ENCODE measurements at regions of chr4 and their contacts with region 1.

Region 1: DNA sequence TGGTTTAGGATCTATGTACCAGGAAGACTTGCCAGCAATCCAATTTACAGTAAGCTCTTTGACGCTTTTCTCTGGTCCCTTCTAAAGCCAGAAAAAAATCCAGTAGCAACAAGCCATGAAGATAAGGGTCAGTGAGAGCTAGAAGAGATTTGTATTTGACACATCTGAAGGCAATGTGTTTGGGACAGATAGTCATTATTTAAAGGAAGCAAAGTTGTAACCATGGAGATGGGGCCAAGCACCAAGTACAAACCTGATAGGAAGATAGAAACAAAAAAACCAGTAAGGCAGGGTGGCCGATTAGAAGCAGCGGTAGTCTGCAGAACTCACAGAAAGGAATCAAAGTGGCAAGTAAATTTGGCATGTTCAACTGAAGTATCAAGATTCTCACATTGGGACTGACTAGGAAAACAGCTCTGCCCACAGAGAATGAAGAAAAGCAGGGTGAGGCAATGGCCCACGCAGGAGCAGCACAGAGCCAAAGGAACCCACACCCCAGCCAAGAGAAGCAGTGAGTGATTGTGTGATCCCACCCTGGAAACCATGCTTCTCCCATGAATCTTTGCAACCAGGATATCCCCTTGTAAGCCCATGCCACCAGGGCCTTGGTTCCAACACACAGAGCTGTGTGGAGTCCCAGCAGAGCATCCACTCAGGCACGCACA is 12.9 kb upstream of the C4orf54 start:
- DNase-seq: no peak
- ATAC-seq: no peak
- H3K4me3 ChIP-seq: no peak overlapping the region
- H3K27ac ChIP-seq: no peak overlapping the region
- H3K4me1 ChIP-seq: no peaks in the 10 kb centered on the region
- H3K27me3 ChIP-seq: no peaks in the 10 kb centered on the region
- CTCF ChIP-seq: no peak
- POLR2A ChIP-seq: no peak

Region 2: GRCh38 chr4:100716416-100716815 is 1045.9 kb after region 1 on chr4:
- in situ Hi-C with region 1: no loop called
- intact Hi-C with region 1: loop called (anchors 5 kb)
- DNase-seq: no peak
- ATAC-seq: no peak
- H3K4me3 ChIP-seq: no peak overlapping the region
- H3K27ac ChIP-seq: no peak overlapping the region
- H3K4me1 ChIP-seq: no peaks in the 10 kb centered on the region
- H3K27me3 ChIP-seq: no peaks in the 10 kb centered on the region
- CTCF ChIP-seq: no peak
- POLR2A ChIP-seq: no peak

Measured in gastrocnemius medialis (tissue), 4 donors.